HEK293 (cell line): ENCODE measurements at regions of chr7 and their contacts with region 1.

Region 1: GRCh38 chr7:41705109-41705901 is 2.4 kb upstream of the INHBA start:
- H3K4me3 ChIP-seq: peak overlapping the region; percentile 40
- H3K27ac ChIP-seq: peak overlapping the region; percentile 62; the same call in 1 of the 2 replicates
- H3K4me1 ChIP-seq: peaks cover 17% of the 10 kb centered on the region
- CTCF ChIP-seq: peak; percentile 36; the same call in 1 of the 2 replicates

Region 2: DNA sequence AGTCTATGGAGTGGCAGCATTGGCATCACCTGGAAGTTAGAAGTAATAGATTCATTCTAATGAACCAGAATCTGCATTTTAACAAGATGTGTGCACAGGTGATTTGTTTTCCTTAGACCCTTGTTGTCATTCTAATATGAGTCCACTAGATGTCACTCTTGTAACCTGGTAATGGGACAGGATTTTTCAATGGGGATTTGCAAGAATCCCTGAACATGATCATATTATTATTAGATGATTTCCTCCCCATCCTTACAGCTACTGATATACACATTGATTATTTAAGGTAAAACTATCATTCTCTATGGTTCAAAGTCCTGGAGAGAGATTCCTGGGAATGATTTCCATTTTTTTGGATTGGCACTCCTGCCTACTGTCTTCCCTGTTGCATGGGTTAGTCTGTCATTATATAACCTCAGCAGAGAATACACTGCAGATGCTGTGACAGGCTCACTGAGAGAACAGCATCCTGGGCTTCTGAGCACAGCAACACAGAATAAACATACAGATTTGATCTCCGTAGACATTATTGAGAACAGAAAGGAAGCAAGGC is 1375.6 kb before region 1 on chr7:
- CTCF ChIA-PET with region 1: interaction called, 13 read pairs
- POLR2A ChIA-PET with region 1: interaction called, 3 read pairs
- H3K4me3 ChIP-seq: no peak overlapping the region
- H3K27ac ChIP-seq: no peak overlapping the region
- H3K4me1 ChIP-seq: no peaks in the 10 kb centered on the region
- CTCF ChIP-seq: no peak